Activated CD4-positive, alpha-beta memory T cell treated with anti-CD3 and anti-CD28 coated beads for 36 hours (primary cell): ENCODE measurements at regions of chr20 and their contacts with region 1.

Region 1: GRCh38 chr20:51541189-51542032 is 1.1 kb downstream of the NFATC2 start:
- DNase-seq: peak; percentile 92
- H3K4me3 Mint-ChIP-seq: peak overlapping the region; percentile 98
- H3K27ac Mint-ChIP-seq: peak overlapping the region; percentile 98
- H3K4me1 Mint-ChIP-seq: peaks cover 49% of the 10 kb centered on the region
- H3K27me3 Mint-ChIP-seq: peaks cover 3% of the 10 kb centered on the region

Region 2: GRCh38 chr20:51404298-51405060 is 136.9 kb before region 1 on chr20:
- CTCF ChIA-PET with region 1: interaction called, 11 read pairs
- POLR2A ChIA-PET with region 1: interaction called, 15 read pairs
- intact Hi-C with region 1: loop called (anchors 1 kb)
- DNase-seq: peak; percentile 97
- H3K4me3 Mint-ChIP-seq: peak overlapping the region; percentile 17
- H3K27ac Mint-ChIP-seq: peak overlapping the region; percentile 99
- H3K4me1 Mint-ChIP-seq: peaks cover 93% of the 10 kb centered on the region
- H3K27me3 Mint-ChIP-seq: no peaks in the 10 kb centered on the region

Region 3: GRCh38 chr20:51469578-51470498 is 71.6 kb before region 1 on chr20:
- CTCF ChIA-PET with region 1: interaction called, 6 read pairs
- POLR2A ChIA-PET with region 1: interaction called, 5 read pairs
- intact Hi-C with region 1: loop called (anchors 2 kb)
- DNase-seq: no peak
- H3K4me3 Mint-ChIP-seq: no peak overlapping the region
- H3K27ac Mint-ChIP-seq: peak overlapping the region; percentile 89
- H3K4me1 Mint-ChIP-seq: peaks cover 53% of the 10 kb centered on the region
- H3K27me3 Mint-ChIP-seq: no peaks in the 10 kb centered on the region

Region 4: GRCh38 chr20:51492167-51493092 is 49.0 kb before region 1 on chr20:
- CTCF ChIA-PET with region 1: interaction called, 10 read pairs
- POLR2A ChIA-PET with region 1: interaction called, 35 read pairs
- intact Hi-C with region 1: no loop called
- DNase-seq: no peak
- H3K4me3 Mint-ChIP-seq: no peak overlapping the region
- H3K27ac Mint-ChIP-seq: no peak overlapping the region
- H3K4me1 Mint-ChIP-seq: peaks cover 95% of the 10 kb centered on the region
- H3K27me3 Mint-ChIP-seq: no peaks in the 10 kb centered on the region

Region 5: GRCh38 chr20:51525241-51526129 is 15.9 kb before region 1 on chr20:
- CTCF ChIA-PET with region 1: interaction called, 38 read pairs
- POLR2A ChIA-PET with region 1: interaction called, 128 read pairs
- intact Hi-C with region 1: no loop called
- DNase-seq: peak; percentile 75
- H3K4me3 Mint-ChIP-seq: peak overlapping the region; percentile 70
- H3K27ac Mint-ChIP-seq: peak overlapping the region; percentile 94
- H3K4me1 Mint-ChIP-seq: peaks cover 73% of the 10 kb centered on the region
- H3K27me3 Mint-ChIP-seq: no peaks in the 10 kb centered on the region

Region 6: DNA sequence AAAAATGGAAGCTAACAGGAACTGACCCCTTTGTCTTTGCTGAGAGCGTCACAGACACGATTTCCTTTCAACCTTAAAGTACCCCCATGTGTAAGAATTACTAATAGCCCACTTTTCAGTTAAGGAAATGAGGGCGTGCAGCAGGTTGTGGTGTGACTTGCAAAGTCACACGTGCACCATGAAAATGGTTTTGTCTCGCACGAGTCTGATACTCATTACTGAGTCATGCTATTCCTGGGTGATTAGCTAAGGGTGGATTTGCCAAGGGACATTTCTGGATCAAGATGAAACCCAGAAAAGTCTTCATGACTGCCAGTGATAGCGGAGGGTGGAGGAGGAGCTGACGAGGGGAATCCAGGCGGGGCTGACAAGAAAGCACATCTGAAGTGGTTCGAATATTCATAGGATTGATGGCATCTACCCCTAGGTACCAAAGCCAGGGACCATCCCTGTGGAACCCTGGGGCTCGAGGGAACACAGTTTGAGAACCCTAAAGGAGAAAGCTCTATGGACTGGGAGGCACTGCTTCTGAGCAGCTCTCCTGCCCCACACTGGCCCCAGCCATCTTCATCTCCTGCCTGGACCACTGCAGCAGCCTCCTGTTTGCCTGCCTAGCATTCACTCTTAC is 13.2 kb after region 1 on chr20:
- CTCF ChIA-PET with region 1: interaction called, 11 read pairs
- POLR2A ChIA-PET with region 1: interaction called, 12 read pairs
- intact Hi-C with region 1: no loop called
- DNase-seq: no peak
- H3K4me3 Mint-ChIP-seq: no peak overlapping the region
- H3K27ac Mint-ChIP-seq: no peak overlapping the region
- H3K4me1 Mint-ChIP-seq: peaks cover 10% of the 10 kb centered on the region
- H3K27me3 Mint-ChIP-seq: peaks cover 28% of the 10 kb centered on the region

Region 7: GRCh38 chr20:51608061-51608460 is 66.7 kb after region 1 on chr20:
- CTCF ChIA-PET with region 1: interaction called, 4 read pairs
- POLR2A ChIA-PET with region 1: interaction called, 3 read pairs
- intact Hi-C with region 1: loop called (anchors 1 kb)
- DNase-seq: peak; percentile 61
- H3K4me3 Mint-ChIP-seq: peak overlapping the region; percentile 65
- H3K27ac Mint-ChIP-seq: peak overlapping the region; percentile 88
- H3K4me1 Mint-ChIP-seq: peaks cover 48% of the 10 kb centered on the region
- H3K27me3 Mint-ChIP-seq: peaks cover 23% of the 10 kb centered on the region

Region 8: DNA sequence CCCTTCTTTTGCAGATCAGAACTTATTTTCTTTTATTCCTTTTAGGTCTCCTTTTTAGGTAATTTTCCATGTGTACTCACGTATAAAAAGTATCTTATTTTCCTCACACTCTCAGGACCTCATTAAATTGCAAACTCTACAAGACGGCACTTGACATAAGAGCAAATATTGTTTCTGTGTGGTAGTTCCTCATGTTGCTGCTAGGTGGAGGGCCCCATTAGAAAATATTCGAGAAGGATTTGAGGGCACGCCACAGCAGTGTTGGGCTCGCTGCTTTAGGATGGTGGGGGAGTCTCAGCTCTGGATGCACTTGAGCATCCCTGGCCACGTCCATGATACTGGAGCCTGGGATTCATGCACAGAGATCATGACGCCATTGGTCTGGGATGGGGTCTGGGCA is 715.0 kb after region 1 on chr20:
- CTCF ChIA-PET with region 1: no interaction called
- POLR2A ChIA-PET with region 1: no interaction called
- intact Hi-C with region 1: no loop called
- DNase-seq: no peak
- H3K4me3 Mint-ChIP-seq: no peak overlapping the region
- H3K27ac Mint-ChIP-seq: no peak overlapping the region
- H3K4me1 Mint-ChIP-seq: no peaks in the 10 kb centered on the region
- H3K27me3 Mint-ChIP-seq: peaks cover 11% of the 10 kb centered on the region